ENCODE measurements at regions of chr9 and their contacts with region 1.

Region 1: DNA sequence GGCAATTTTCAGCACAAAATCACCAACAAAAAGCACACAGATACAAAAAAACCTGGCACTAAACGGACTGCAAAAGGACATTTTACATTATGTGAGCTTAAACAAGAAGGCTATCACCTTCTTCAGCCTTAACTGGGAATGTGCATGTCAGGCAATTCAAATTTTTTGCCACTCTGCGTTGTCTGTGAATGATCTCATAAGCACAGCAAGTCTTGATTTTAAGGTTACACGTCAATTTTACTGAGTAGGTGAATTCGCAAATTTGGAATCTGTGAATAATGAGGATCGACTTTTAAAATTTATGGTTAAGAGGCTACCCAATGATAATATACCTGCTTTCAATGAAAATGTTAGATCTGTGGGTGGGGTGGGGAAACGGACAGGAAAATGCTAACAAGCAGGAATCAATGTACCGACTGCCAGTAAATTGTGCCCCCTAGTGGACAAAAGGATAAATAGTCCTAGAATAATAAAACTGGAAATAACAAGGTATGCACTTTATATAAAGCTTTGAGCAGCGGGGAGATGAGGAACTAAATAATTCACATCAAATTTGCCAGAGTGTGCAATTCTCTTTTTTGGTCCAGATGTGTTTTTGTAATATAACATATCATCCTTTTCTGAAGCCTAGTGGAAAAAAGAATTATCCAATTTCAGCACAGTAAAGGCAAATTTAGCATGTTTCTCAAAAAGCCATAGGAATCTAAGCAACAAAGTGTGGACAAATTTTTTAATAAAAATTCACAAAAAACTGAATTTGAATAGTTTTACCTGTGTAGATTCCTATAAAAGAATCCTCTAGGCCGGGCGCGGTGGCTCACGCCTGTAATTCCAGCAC is 20.5 kb downstream of the EQTN start:
- DNase-seq: no peak
- ATAC-seq: peak; percentile 80 to 91 (median 88)
- H3K4me3 ChIP-seq: no peak overlapping the region
- H3K27ac ChIP-seq: no peak overlapping the region
- H3K4me1 ChIP-seq: peaks cover 0 to 8% (median 0%) of the 10 kb centered on the region in 4 donors
- H3K27me3 ChIP-seq: no peaks in the 10 kb centered on the region
- CTCF ChIP-seq: peak; percentile 71 to 84 (median 81)
- POLR2A ChIP-seq: no peak

Region 2: DNA sequence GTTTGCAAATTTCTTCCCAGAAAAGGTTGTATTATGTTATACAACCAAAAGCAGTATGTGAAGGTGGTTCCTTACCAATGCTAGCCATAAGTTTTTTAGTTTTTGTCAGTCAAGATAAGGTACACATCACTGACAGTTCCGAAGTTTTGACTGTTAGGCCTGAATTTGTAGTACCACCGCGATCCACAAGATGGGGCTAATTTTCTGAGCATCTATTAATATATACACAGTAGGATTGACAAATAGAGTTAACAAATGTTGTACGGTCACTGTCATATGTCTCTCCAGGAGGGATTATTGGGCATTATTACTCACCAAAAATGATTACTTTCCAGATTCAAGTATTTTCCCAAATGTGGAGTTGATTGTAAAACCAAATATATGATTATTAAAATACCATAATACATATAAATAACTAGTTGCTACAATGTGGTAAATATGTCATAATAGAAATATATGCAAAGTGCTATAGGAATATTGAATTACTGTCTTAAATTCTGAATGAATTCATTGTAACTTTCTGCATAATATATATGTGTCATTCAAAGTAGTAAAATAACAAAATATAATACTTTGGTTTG is 242.5 kb before region 1 on chr9:
- intact Hi-C with region 1: loop called (anchors 10 kb)
- DNase-seq: peak in 1 of 3 donors; percentile 51
- ATAC-seq: peak; percentile 77 to 88 (median 82)
- H3K4me3 ChIP-seq: no peak overlapping the region
- H3K27ac ChIP-seq: no peak overlapping the region
- H3K4me1 ChIP-seq: peaks cover 0 to 18% (median 0%) of the 10 kb centered on the region in 4 donors
- H3K27me3 ChIP-seq: no peaks in the 10 kb centered on the region
- CTCF ChIP-seq: peak; percentile 68 to 85 (median 78)
- POLR2A ChIP-seq: no peak